ENCODE measurements at regions of chr10 and their contacts with region 1.

Region 1: DNA sequence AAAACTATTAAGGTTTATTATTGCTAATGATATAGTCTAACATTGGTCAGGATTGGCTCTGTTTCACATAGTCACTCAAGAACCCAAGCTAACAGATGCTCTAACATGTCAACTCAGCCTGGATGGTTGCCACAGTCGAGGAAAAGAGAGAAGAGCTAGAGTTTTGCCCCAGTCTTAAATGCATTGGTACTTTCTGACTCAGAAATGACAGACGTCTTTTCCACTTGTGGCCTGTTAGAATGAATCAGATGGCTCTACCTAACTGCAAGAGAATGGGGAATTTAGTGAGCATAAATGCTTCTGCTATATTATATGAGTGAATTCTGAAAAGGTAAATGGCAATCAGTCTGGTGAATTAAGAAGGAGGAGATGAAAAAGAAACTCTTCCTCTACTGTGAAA is 13.9 kb downstream of the HECTD2 start:
- DNase-seq: peak; percentile 48
- H3K4me3 Mint-ChIP-seq: peak overlapping the region; percentile 2
- H3K27ac Mint-ChIP-seq: no peak overlapping the region
- H3K4me1 Mint-ChIP-seq: peaks cover 16% of the 10 kb centered on the region
- H3K27me3 Mint-ChIP-seq: no peaks in the 10 kb centered on the region

Region 2: DNA sequence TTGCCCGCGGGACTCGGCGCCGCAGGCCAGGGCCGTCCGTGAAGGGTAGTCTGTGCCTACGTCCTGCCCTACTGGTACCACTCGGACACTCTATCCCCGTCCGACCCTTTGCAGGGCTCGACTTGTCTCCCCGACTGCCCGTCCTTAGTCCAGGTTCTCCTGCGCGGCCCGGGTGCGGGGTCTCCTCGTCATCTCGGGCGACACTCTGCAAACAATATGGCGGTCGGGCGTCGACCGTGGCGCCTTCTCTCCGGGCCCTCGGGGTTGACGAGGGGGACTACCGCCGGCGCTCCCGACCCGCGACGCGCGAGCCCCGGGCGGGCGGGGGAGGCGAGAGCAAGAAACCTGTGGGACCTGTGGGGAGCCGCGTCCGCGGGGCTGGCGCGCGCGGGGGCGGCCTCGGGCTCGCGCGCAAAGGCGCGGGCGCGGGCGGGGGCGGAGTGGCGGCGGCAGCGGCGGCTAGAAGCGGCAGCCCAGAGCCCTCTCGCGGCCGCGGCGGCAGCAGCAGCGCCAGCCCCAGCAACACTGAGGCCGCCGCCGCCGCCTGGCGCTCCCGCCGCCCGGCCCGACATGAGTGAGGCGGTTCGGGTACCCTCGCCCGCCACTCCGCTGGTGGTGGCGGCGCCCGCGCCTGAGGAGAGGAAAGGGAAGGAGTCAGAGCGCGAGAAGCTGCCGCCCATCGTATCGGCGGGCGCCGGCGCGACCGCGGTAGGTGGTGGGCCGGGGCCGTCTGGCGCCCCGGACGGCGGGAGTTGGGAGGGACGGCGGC is 14.0 kb before region 1 on chr10 and contains the start of gene HECTD2:
- CTCF ChIA-PET with region 1: interaction called, 5 read pairs
- POLR2A ChIA-PET with region 1: interaction called, 17 read pairs
- intact Hi-C with region 1: loop called (anchors 1 kb)
- DNase-seq: peak; percentile 82
- H3K4me3 Mint-ChIP-seq: peak within 1 kb of the TSS; percentile 79
- H3K27ac Mint-ChIP-seq: peak within 1 kb of the TSS; percentile 83
- H3K4me1 Mint-ChIP-seq: peaks cover 13% of the 10 kb centered on the region
- H3K27me3 Mint-ChIP-seq: no peaks in the 10 kb centered on the region
- total RNA-seq, gene HECTD2: 4.0 to 5.5 TPM

Measured in activated CD4-positive, alpha-beta memory T cell treated with anti-CD3 and anti-CD28 coated beads for 36 hours (primary cell).